ENCODE measurements at regions of chr17 and their contacts with region 1.

Region 1: GRCh38 chr17:8991514-8992285 is 26.2 kb upstream of the PIK3R5 start:
- DNase-seq: peak; percentile 80
- H3K4me3 ChIP-seq: no peak overlapping the region
- H3K27ac ChIP-seq: no peak overlapping the region
- H3K4me1 ChIP-seq: peaks cover 0 to 4% (median 0%) of the 10 kb centered on the region in 4 donors
- H3K27me3 ChIP-seq: peaks cover 0 to 4% (median 0%) of the 10 kb centered on the region in 3 donors
- CTCF ChIP-seq: peak; percentile 60 to 82 (median 76)
- EP300 ChIP-seq: no peak
- POLR2A ChIP-seq: no peak

Region 2: DNA sequence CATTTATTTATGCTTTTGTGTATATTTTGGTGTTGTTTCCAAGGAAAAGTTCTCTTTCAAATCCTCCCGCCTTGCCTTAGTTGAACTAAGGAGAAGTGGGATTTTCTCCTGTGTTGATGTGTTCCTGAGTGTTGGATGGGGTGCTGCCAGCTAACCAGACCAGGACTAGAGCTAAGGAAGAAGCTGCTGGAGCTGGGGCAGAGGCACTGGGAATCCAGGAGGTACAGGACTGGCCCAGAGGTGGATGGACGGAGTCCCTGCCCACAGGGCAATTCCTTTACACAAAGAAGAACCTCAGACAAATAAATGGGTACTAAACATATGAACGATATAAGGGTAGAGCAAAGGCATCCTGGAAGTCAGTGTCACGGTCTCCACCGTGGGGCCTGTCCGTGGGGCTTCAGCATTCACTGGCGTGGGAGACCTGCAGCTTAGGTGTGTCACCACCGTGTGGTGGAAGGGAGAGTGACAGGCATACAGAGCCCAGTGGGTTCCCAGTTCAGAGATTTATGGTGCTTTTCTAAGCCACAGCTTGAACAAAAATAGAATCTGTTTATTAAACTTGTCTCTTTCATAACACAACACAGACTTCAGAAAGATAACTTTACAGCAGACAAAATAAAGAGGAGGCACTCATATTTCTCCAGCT is 300.3 kb after region 1 on chr17:
- intact Hi-C with region 1: loop called (anchors 5 kb)
- DNase-seq: peak; percentile 83
- H3K4me3 ChIP-seq: no peak overlapping the region
- H3K27ac ChIP-seq: peak overlapping the region; percentile 65 to 75 (median 72)
- H3K4me1 ChIP-seq: peaks cover 0 to 34% (median 31%) of the 10 kb centered on the region in 4 donors
- H3K27me3 ChIP-seq: no peaks in the 10 kb centered on the region
- CTCF ChIP-seq: peak; percentile 61 to 79 (median 72)
- EP300 ChIP-seq: peak in 3 of 4 donors; percentile 50 to 57 (median 54)
- POLR2A ChIP-seq: no peak

Region 3: DNA sequence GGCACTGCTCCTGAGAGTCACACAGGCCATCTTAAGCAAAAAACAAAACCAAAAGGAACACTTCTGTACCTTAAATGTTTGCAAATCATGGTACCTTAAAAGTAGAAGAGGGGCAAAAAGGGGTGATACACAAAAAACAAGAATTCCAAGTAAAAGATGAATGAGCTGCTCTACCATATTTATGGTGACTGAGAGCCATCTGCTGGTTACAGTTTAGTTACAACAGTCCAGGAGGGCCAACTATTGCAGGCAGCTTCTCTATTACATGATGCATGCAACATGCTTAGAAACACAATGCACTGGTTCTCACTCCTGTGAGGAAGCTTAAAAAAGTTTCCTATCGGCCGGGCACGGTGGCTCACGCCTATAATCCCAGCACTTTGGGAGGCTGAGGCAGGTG is 530.4 kb after region 1 on chr17:
- intact Hi-C with region 1: loop called (anchors 2 kb)
- DNase-seq: no peak
- H3K4me3 ChIP-seq: no peak overlapping the region
- H3K27ac ChIP-seq: no peak overlapping the region
- H3K4me1 ChIP-seq: peaks cover 0 to 12% (median 6%) of the 10 kb centered on the region in 4 donors
- H3K27me3 ChIP-seq: no peaks in the 10 kb centered on the region
- CTCF ChIP-seq: peak; percentile 15 to 46 (median 38)
- EP300 ChIP-seq: no peak
- POLR2A ChIP-seq: no peak